PC-3 (cell line): ENCODE measurements at regions of chr17 and their contacts with region 1.

Region 1: DNA sequence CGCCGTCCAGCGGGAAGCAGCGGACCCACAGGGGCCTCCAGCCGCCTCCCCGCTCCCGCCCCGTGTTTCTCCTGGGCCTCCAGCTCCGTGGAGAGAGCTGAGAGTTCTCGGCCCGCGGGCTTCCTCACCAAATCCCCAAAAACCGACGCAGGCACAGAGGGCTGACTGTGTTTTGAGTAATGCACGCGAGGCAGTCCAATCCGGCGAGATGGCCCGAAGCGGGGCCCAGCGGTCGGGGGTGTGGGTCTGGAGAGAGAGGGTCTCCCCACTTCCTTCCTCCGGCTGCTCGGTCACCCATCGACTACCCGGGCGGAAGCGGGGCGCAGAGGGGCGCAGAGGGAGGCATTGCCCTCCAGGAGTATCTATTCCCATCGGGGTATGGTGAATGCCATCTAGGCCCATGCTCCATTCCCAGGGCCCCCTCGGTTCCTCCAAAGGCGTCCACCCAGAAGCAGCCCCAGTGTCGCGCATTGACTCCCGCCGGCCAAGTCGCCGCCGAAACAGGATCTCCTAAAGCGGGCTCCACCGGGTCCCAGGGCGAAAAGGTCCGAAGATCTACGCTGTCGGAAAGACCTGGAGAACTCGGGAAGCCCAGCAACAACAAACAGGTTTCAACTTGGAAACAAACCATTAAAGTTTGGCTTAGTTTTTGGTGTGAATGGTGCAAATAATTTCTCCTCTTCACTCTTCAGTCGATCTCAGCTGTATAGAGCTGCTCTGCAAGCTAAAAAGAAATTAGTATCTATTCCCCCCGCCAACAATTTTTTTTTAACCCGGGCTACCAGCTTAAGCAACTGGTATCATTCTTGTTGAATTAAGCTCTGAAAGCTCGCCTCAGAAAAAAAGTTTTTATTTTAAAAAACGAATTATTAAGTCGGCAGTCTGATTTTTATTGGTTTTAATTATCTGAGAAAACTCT is 19.2 kb upstream of the HOXB13 start:
- DNase-seq: peak; percentile 71
- ATAC-seq: peak; percentile 27
- H3K4me3 ChIP-seq: peak overlapping the region; percentile 78
- H3K27ac ChIP-seq: peak overlapping the region; percentile 74
- H3K4me1 ChIP-seq: peaks cover 50% of the 10 kb centered on the region
- H3K27me3 ChIP-seq: no peaks in the 10 kb centered on the region
- CTCF ChIP-seq: no peak

Region 2: GRCh38 chr17:48483471-48484131 is 264.1 kb before region 1 on chr17:
- CTCF ChIA-PET with region 1: no interaction called
- POLR2A ChIA-PET with region 1: no interaction called
- intact Hi-C with region 1: no loop called
- DNase-seq: peak; percentile 99
- ATAC-seq: peak; percentile 88
- H3K4me3 ChIP-seq: peak overlapping the region; percentile 22; the same call in 1 of the 2 replicates
- H3K27ac ChIP-seq: peak overlapping the region; percentile 97
- H3K4me1 ChIP-seq: peaks cover 59% of the 10 kb centered on the region
- H3K27me3 ChIP-seq: no peaks in the 10 kb centered on the region
- CTCF ChIP-seq: no peak

Region 3: DNA sequence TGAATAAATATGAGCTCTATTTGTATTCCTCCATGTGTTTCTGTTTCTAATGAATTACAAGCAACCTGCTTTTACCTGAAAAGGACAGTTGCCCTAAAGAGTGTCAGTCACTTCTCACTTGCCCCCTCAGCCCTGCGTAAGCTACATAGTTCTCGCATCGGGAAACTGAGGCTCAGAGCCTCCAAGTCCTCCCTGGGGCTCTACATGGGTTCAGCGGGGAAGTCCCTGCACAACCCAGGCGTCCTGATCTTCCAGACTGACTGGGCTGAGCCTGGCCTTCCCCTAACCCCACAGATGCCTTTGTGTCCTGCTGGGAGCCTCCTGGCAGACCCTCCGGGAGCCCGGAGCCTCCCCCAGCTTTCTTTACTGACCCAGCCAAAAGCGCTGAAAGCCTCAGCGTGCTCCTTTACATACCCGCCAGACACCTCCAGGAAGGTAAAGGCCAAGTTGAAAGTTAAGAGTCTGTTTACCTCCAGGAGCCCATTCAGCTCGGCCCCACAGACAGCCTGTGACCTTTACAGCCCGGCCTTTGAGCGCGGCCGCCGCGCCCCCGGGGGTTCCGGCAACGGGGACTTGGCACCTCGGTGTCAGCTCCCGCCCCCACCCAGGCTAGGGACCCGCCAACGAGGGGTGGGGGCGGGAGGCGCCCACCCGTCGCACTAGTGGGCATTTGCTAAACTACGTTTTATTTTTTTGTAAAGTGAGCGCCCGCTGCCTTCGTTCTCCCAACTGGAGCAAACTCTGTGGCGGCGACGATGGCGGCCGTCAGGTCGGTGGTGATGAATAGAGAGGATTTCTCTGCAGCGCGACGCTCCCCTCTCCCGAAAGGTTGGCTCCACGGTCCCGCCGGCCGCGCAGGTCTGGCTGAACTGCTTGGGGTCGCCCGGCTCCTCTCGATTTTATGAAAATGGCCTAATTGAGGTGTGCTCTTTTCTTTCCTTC is 14.7 kb before region 1 on chr17:
- CTCF ChIA-PET with region 1: interaction called, 4 read pairs
- POLR2A ChIA-PET with region 1: interaction called, 26 read pairs
- intact Hi-C with region 1: loop called (anchors 1 kb)
- DNase-seq: peak; percentile 52
- ATAC-seq: peak; percentile 1; the same call in 1 of the 2 replicates
- H3K4me3 ChIP-seq: peak overlapping the region; percentile 65
- H3K27ac ChIP-seq: peak overlapping the region; percentile 56
- H3K4me1 ChIP-seq: peaks cover 69% of the 10 kb centered on the region
- H3K27me3 ChIP-seq: no peaks in the 10 kb centered on the region
- CTCF ChIP-seq: no peak